Activated CD4-positive, alpha-beta memory T cell treated with anti-CD3 and anti-CD28 coated beads, Interleukin-2, amount 10 ng/mL, durations not matched to agents 7 days and 5 days (primary cell): ENCODE measurements at regions of chr12 and their contacts with region 1.

Region 1: GRCh38 chr12:13165617-13166041 is 30.9 kb upstream of the EMP1 start:
- DNase-seq: peak; percentile 87
- H3K4me3 Mint-ChIP-seq: no peak overlapping the region
- H3K27ac Mint-ChIP-seq: peak overlapping the region; percentile 80
- H3K4me1 Mint-ChIP-seq: peaks cover 26% of the 10 kb centered on the region
- H3K27me3 Mint-ChIP-seq: peaks cover 17% of the 10 kb centered on the region

Region 2: DNA sequence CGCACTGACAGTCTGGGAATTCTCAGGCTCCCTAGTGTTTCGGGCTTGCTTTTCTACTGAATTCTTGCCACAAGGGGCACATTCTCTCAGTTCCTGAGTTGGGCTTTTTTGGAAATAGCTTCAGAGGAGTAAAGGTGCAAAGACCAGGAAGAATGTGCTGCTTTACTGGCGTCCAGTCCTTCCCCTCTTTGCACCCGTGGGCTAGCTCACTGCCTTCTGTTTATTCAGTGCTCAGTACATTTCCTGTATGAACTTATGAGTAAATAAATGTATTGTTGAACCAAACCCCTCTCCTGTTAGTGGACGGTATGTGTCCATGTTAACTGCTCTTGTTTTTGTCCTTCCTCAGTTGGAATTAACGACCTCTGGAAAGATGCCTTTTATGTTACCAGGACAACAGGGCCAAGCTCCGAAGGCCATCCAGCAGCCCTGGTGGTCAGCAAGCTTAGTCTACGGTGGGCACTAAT is 86.2 kb before region 1 on chr12:
- CTCF ChIA-PET with region 1: no interaction called
- POLR2A ChIA-PET with region 1: no interaction called
- DNase-seq: no peak
- H3K4me3 Mint-ChIP-seq: no peak overlapping the region
- H3K27ac Mint-ChIP-seq: no peak overlapping the region
- H3K4me1 Mint-ChIP-seq: no peaks in the 10 kb centered on the region
- H3K27me3 Mint-ChIP-seq: no peaks in the 10 kb centered on the region

Region 3: GRCh38 chr12:13179211-13180074 is 13.8 kb after region 1 on chr12:
- CTCF ChIA-PET with region 1: interaction called, 7 read pairs
- POLR2A ChIA-PET with region 1: interaction called, 14 read pairs
- DNase-seq: peak; percentile 81
- H3K4me3 Mint-ChIP-seq: peak overlapping the region; percentile 62
- H3K27ac Mint-ChIP-seq: peak overlapping the region; percentile 89
- H3K4me1 Mint-ChIP-seq: peaks cover 68% of the 10 kb centered on the region
- H3K27me3 Mint-ChIP-seq: peaks cover 32% of the 10 kb centered on the region

Region 4: GRCh38 chr12:13289653-13290289 is 124.1 kb after region 1 on chr12:
- CTCF ChIA-PET with region 1: no interaction called
- POLR2A ChIA-PET with region 1: no interaction called
- DNase-seq: no peak
- H3K4me3 Mint-ChIP-seq: no peak overlapping the region
- H3K27ac Mint-ChIP-seq: no peak overlapping the region
- H3K4me1 Mint-ChIP-seq: no peaks in the 10 kb centered on the region
- H3K27me3 Mint-ChIP-seq: peaks cover 12% of the 10 kb centered on the region